ENCODE measurements at regions of chr6 and their contacts with region 1.

Region 1: GRCh38 chr6:53492860-53493634 is 51.9 kb downstream of the GCLC start:
- DNase-seq: peak; percentile 22 to 59 (median 49)
- H3K4me3 ChIP-seq: no peak overlapping the region
- H3K4me3 Mint-ChIP-seq: peak overlapping the region; percentile 15 to 21
- H3K27ac ChIP-seq: no peak overlapping the region
- H3K27ac Mint-ChIP-seq: no peak overlapping the region
- H3K4me1 ChIP-seq: peaks cover 3 to 5% of the 10 kb centered on the region in 2 donors
- H3K4me1 Mint-ChIP-seq: peaks cover 7% of the 10 kb centered on the region
- H3K27me3 ChIP-seq: no peaks in the 10 kb centered on the region
- H3K27me3 Mint-ChIP-seq: peaks cover 2 to 7% (median 5%) of the 10 kb centered on the region in 3 donors
- CTCF ChIP-seq: peak; percentile 79

Region 2: DNA sequence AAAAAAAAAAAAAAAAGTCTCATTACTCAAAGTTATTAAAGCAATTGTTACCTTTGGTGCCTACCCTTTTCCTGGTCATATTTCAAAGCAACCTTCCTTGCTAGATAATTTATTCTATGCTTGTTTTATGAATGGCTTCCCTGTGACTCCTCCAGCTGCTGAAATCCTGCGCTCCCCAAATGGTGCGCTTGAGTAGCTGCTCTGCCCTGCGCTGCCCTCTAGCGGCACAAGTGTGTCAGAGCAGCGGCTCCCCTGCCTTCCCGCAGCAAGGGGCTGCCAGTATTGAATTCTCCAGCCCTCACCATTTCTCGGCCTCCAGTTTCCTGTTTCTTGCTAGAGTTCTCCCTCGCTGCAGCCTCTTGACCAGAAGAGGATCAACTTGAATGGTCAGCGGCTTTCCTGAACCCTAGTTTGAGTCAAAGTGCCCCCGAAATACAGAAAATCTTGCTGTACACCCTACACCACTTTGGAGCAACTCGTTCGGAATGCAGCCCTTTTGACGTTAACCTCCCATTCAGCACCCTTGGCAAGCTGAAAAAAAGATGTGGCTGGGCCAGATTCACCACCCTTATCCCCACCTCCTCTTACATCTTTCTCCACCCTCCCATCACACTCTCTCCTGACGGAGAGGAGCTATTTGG is 232.9 kb after region 1 on chr6:
- intact Hi-C with region 1: loop called (anchors 2 to 5 kb)
- DNase-seq: peak; percentile 56 to 69 (median 64)
- H3K4me3 ChIP-seq: no peak overlapping the region
- H3K4me3 Mint-ChIP-seq: no peak overlapping the region
- H3K27ac ChIP-seq: no peak overlapping the region
- H3K27ac Mint-ChIP-seq: peak overlapping the region in 1 of 7 donors; percentile 80
- H3K4me1 ChIP-seq: peaks cover 4 to 5% of the 10 kb centered on the region in 2 donors
- H3K4me1 Mint-ChIP-seq: peaks cover 15% of the 10 kb centered on the region
- H3K27me3 ChIP-seq: no peaks in the 10 kb centered on the region
- H3K27me3 Mint-ChIP-seq: peaks cover 3 to 9% (median 3%) of the 10 kb centered on the region in 3 donors
- CTCF ChIP-seq: peak; percentile 97

Region 3: GRCh38 chr6:53794720-53795253 is 301.7 kb after region 1 on chr6 and contains the start of gene LRRC1:
- intact Hi-C with region 1: no loop called
- DNase-seq: peak; percentile 65 to 71 (median 71)
- H3K4me3 ChIP-seq: peak within 1 kb of the TSS; percentile 68 to 93 (median 86)
- H3K4me3 Mint-ChIP-seq: peak within 1 kb of the TSS; percentile 99
- H3K27ac ChIP-seq: peak within 1 kb of the TSS; percentile 3 to 37
- H3K27ac Mint-ChIP-seq: peak within 1 kb of the TSS; percentile 55 to 86 (median 77)
- H3K4me1 ChIP-seq: peaks cover 26 to 27% of the 10 kb centered on the region in 2 donors
- H3K4me1 Mint-ChIP-seq: peaks cover 37% of the 10 kb centered on the region
- H3K27me3 ChIP-seq: peaks cover 19 to 22% of the 10 kb centered on the region in 2 donors
- H3K27me3 Mint-ChIP-seq: peaks cover 30 to 37% (median 36%) of the 10 kb centered on the region in 3 donors
- CTCF ChIP-seq: no peak
- polyA plus RNA-seq, gene LRRC1: 0.18 to 1.6 (median 0.92) TPM

Measured in CD14-positive monocyte (primary cell).